Head of caudate nucleus (tissue), 42 donors: ENCODE measurements at regions of chr6 and their contacts with region 1.

Region 1: DNA sequence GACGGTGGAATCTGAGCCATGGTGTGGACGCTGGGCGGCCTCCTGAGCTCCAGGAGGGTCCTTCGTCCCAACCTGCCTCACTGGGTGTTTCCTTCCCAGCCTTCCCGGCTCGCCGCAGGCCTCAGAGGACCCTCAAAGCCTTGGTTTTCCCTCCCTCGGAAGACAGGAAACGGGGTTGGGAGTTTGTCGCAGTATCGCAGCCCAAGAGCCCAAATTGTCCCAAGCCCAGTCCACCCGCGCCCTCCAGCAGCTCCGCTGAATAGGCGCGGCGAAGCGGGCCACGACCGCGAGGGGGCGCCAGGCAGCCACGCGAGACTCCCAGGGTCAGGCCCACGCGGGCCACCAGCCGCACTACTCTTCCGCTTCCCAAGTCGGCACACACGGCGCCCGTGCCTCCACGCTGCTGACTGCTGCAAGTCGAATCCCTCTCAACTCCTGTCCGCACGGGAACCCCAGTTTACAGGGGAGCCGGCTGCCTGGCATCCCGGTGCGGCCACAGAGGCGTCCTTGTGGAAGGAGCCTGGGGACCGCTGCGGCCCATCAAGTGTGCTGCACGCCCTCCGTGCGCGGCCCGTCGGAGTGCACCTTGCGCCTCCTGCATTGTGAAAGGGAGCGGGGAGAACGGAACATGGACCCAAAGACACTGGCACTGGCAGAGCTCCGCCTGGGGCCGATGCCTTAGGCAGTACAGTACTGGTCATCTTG is 40.4 kb upstream of the HMGA1 start:
- DNase-seq: peak; percentile 71 to 96 (median 91)

Region 2: DNA sequence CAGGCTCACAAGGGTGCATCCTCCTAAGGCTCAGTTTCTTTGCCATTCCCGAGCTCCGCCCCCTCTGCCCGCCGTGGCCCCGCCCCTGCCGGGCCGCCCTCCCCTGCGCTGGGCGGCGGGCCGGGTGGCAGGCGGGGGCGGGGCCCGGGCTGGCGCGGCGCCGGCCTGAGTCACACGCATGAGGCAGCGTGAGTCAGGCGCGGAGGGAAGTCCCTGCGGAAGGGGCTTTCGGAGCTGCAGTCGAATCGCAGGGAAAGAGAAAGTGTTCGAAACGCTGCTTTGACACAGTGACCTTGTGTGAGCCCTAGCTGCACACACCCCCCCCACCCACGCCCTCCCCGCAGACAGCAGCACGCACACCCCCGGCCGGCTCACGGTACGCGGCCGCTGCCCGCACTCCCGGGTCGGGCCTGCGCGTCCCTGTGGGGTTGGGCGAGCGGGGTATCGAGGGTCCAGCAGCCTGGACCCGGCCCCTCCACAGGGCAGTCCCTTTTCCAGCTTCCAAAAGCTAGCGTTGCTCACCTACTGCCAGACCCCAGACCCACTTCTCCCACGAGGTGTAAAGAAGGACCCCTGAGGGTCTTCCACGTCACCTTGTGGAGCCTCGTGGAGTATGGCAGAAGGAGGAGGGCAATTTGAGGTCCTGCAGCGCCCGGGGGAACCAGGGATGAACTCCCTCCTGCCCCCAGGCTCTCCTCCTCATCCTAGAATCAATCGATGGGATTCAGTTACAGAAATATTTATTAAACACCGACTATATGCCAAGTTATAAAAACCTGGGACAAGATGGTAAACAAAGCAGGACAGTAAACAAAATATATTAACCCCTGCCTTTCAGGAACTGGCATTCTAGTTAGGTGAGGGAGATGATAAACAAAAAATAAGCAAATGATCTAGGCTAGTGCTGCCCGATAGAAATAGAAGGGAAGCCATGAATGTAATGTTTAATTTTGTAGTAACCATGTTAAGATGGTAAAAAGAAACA is 28.0 kb after region 1 on chr6:
- intact Hi-C with region 1: no loop called
- DNase-seq: peak; percentile 73 to 97 (median 92)

Region 3: GRCh38 chr6:34248727-34249551 is 52.7 kb after region 1 on chr6 and contains the start of gene SMIM29:
- intact Hi-C with region 1: no loop called
- DNase-seq: peak; percentile 92 to 99 (median 98)

Region 4: DNA sequence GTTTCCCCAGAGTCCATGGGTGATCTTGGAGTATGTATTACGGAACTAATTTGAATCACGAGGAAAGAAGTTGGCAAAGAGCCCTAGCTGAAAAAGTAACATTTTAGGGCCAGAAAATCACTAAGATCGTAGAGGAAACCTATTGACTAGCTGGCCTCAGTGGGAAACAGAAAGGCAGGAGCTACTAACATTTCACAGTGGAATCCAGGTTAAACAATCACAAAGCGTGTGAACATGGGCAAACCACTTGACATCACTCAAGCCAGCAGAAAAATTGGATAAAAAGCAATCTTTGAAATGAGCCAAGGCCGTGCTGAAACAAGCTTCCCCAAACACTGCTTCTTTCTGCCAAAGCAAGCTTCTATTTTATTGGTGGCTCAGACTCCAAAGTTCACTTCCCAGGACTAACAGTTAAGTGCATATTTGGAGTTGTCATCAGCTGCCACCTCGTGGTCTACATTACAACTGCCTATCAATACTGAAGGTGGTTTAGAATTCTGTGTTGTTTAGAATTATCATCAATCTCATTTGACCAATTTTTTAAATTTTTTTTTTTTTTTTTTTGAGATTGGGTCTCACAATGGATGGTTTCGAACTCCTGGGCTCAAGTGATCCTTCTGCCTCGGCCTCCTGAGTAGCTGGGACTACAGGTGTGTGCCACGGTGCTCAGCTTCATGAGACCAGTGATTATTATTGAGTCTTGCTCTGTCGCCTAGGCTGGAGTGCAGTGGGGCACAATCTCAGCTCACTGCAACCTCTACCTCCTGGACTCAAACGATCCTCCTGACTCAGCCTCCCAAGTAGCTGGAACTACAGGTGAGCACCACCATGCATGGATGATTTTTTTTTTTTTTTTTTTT is 219.0 kb after region 1 on chr6:
- intact Hi-C with region 1: loop called (anchors 10 kb)
- DNase-seq: peak in 40 of 42 donors; percentile 15 to 88 (median 71)